Prostate gland (tissue), 2 donors: ENCODE measurements at regions of chr14 and their contacts with region 1.

Region 1: GRCh38 chr14:77760381-77761246 is at the start of gene SNW1:
- DNase-seq: peak; percentile 92
- H3K4me3 ChIP-seq: peak within 1 kb of the TSS; percentile 67 to 74
- H3K27ac ChIP-seq: peak within 1 kb of the TSS; percentile 82 to 86
- H3K4me1 ChIP-seq: no peaks in the 10 kb centered on the region
- H3K27me3 ChIP-seq: no peaks in the 10 kb centered on the region
- CTCF ChIP-seq: peak in 1 of 4 experiments; percentile 19
- POLR2A ChIP-seq: peak; percentile 69
- total RNA-seq, gene SNW1: 45.6 to 46.3 TPM

Region 2: DNA sequence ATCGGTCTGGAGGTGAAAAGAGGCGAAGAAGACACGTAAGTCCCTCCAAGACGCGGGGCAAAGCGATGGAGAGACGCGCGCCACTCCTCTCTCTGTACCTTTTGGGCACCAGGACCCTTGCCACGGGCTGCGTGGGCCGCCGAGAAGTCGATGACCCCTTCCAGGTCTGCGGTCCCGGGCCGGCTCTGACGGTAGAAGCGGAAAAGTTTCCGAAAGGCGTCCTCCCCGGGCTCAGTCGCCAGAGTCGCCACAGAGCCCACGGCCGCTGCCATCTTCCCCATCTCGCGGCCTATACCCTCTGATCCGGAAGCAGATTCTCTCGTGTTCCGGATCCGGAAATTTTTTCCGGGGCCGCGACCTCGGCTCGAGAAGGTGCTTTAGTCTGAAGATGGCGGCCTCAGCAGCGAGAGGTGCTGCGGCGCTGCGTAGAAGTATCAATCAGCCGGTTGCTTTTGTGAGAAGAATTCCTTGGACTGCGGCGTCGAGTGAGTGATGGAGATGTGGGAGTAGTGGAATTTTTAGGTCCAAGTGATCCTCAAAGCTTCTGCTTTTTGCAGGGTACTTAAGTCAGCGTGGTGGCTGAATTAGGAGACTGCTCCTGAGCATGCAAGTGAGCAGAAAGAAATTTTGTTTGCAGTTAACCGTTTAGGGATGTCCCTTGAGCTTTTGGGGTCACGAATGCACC is 52.7 kb before region 1 on chr14 and contains the starts of genes ALKBH1 and SLIRP:
- intact Hi-C with region 1: loop called (anchors 2 kb)
- DNase-seq: peak; percentile 79
- H3K4me3 ChIP-seq: peak within 1 kb of the TSS; percentile 74 to 96
- H3K27ac ChIP-seq: peak within 1 kb of the TSS; percentile 67 to 74
- H3K4me1 ChIP-seq: no peaks in the 10 kb centered on the region
- H3K27me3 ChIP-seq: no peaks in the 10 kb centered on the region
- CTCF ChIP-seq: no peak
- POLR2A ChIP-seq: peak; percentile 26
- total RNA-seq, gene ALKBH1: 12.5 to 20.4 TPM
- total RNA-seq, gene SLIRP: 126 to 341 TPM

Region 3: GRCh38 chr14:77799863-77800730 is 39.5 kb after region 1 on chr14 and contains the start of gene ADCK1:
- intact Hi-C with region 1: loop called (anchors 2 kb)
- DNase-seq: peak; percentile 87
- H3K4me3 ChIP-seq: peak within 1 kb of the TSS; percentile 66 to 93
- H3K27ac ChIP-seq: peak within 1 kb of the TSS; percentile 67 to 83
- H3K4me1 ChIP-seq: no peaks in the 10 kb centered on the region
- H3K27me3 ChIP-seq: no peaks in the 10 kb centered on the region
- CTCF ChIP-seq: peak in 2 of 4 experiments; percentile 49 to 50
- POLR2A ChIP-seq: peak; percentile 17
- total RNA-seq, gene ADCK1: 9.6 to 10.1 TPM